CD4-positive, alpha-beta memory T cell (primary cell): ENCODE measurements at regions of chr1 and their contacts with region 1.

Region 1: DNA sequence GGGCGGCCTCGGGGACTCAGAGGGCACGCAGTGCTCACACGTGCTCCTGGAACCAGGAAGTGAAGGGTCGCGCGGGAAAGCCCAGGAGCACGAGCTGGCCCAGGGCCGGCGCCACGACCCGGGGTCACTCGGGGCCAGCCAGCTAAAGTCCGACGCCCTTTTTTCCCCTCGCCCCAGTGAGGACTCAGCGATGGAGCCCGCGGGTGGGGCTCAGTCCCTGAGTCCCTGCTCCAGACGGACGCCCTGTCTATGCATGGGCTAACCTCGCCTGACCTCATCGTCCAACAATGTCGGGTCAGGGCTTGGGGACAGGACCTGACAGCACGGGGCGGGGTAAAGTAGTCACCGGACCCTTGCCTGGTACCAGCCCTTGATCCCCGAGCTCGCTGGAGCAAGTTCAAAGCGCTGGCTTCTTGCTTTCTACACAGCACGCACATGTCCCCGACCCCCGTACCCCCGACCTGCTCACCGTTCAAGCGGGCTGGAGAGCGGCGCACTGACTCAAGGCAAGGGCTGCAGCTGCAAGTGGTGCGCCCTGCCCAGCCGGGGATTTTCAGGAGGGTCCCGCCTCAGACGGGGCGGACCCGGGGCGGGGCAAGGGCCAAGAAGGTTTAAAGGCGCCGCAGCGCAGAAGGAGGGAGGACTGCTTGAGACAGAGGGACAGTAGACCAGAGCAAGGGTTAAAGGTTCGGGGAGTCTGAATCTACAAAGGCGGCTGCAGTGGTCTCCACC is at the start of gene TAGLN2:
- DNase-seq: peak; percentile 87 to 91 (median 89)
- H3K4me3 ChIP-seq: peak within 1 kb of the TSS; percentile 89 to 93
- H3K4me3 Mint-ChIP-seq: peak within 1 kb of the TSS; percentile 94 to 99 (median 98)
- H3K27ac ChIP-seq: peak within 1 kb of the TSS; percentile 98
- H3K27ac Mint-ChIP-seq: peak within 1 kb of the TSS; percentile 99 to 100 (median 100)
- H3K4me1 ChIP-seq: peaks cover 41% of the 10 kb centered on the region
- H3K4me1 Mint-ChIP-seq: peaks cover 29 to 63% (median 41%) of the 10 kb centered on the region in 4 donors
- H3K27me3 ChIP-seq: no peaks in the 10 kb centered on the region
- H3K27me3 Mint-ChIP-seq: peaks cover 0 to 5% of the 10 kb centered on the region in 2 donors
- total RNA-seq, gene TAGLN2: 196 to 207 TPM

Region 2: GRCh38 chr1:159780583-159781582 is 144.3 kb before region 1 on chr1 and contains the start of gene DUSP23:
- CTCF ChIA-PET with region 1: interaction called, 3 read pairs
- POLR2A ChIA-PET with region 1: interaction called, 24 read pairs
- intact Hi-C with region 1: loop called (anchors 1 kb)
- DNase-seq: peak; percentile 96 to 97 (median 97)
- H3K4me3 ChIP-seq: peak within 1 kb of the TSS; percentile 39 to 57
- H3K4me3 Mint-ChIP-seq: peak within 1 kb of the TSS; percentile 83 to 93 (median 87)
- H3K27ac ChIP-seq: peak within 1 kb of the TSS; percentile 61
- H3K27ac Mint-ChIP-seq: peak within 1 kb of the TSS; percentile 81 to 96 (median 92)
- H3K4me1 ChIP-seq: peaks cover 16% of the 10 kb centered on the region
- H3K4me1 Mint-ChIP-seq: peaks cover 14 to 55% (median 36%) of the 10 kb centered on the region in 4 donors
- H3K27me3 ChIP-seq: no peaks in the 10 kb centered on the region
- H3K27me3 Mint-ChIP-seq: no peaks in the 10 kb centered on the region
- total RNA-seq, gene DUSP23: 14.5 to 15.7 TPM

Region 3: DNA sequence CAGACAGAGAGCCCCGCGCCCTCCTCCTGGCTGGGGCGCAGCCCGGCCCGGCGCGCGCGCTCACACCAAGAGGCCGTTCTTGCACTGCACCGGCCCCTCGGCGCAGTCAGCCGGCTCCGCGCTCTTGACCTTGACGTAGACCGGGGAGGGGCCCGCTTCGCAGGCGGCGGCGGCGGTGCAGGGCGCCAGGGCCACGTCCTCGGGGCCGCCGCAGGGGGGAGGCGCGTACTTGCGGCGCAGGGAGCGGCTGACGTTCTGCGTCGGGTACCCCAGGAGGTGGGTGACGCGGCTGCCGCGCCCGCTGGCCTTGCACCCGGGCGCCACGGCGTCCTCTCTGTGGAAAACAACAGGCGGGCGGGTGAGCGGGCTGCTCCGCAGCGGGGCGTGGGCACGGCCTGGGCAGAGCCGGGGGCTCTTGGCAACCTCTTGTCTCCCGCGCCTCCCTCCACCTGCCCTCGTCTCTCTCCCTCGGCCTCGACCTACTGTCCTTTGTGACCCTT is 70.4 kb before region 1 on chr1:
- CTCF ChIA-PET with region 1: interaction called, 4 read pairs
- POLR2A ChIA-PET with region 1: interaction called, 40 read pairs
- intact Hi-C with region 1: loop called (anchors 5 kb)
- DNase-seq: peak; percentile 66 to 75 (median 70)
- H3K4me3 ChIP-seq: peak overlapping the region; percentile 42 to 53
- H3K4me3 Mint-ChIP-seq: peak overlapping the region; percentile 83 to 95 (median 89)
- H3K27ac ChIP-seq: peak overlapping the region; percentile 38
- H3K27ac Mint-ChIP-seq: peak overlapping the region; percentile 33 to 93 (median 84)
- H3K4me1 ChIP-seq: peaks cover 14% of the 10 kb centered on the region
- H3K4me1 Mint-ChIP-seq: peaks cover 9 to 25% (median 14%) of the 10 kb centered on the region in 4 donors
- H3K27me3 ChIP-seq: no peaks in the 10 kb centered on the region
- H3K27me3 Mint-ChIP-seq: no peaks in the 10 kb centered on the region

Region 4: GRCh38 chr1:159945483-159946241 is 20.5 kb after region 1 on chr1 and contains the start of gene IGSF9:
- CTCF ChIA-PET with region 1: interaction called, 4 read pairs
- POLR2A ChIA-PET with region 1: interaction called, 17 read pairs
- intact Hi-C with region 1: loop called (anchors 1 kb)
- DNase-seq: peak; percentile 68 to 79 (median 71)
- H3K4me3 ChIP-seq: peak within 1 kb of the TSS in 1 of 2 donors; percentile 38
- H3K4me3 Mint-ChIP-seq: peak within 1 kb of the TSS; percentile 32 to 86 (median 68)
- H3K27ac ChIP-seq: no peak within 1 kb of the TSS
- H3K27ac Mint-ChIP-seq: peak within 1 kb of the TSS in 3 of 7 donors; percentile 12 to 87 (median 65)
- H3K4me1 ChIP-seq: peaks cover 13% of the 10 kb centered on the region
- H3K4me1 Mint-ChIP-seq: peaks cover 8 to 12% (median 10%) of the 10 kb centered on the region in 4 donors
- H3K27me3 ChIP-seq: peaks cover 21% of the 10 kb centered on the region
- H3K27me3 Mint-ChIP-seq: peaks cover 25 to 35% of the 10 kb centered on the region in 2 donors
- total RNA-seq, gene IGSF9: not detected

Region 5: GRCh38 chr1:159991513-159991912 is 66.4 kb after region 1 on chr1:
- CTCF ChIA-PET with region 1: no interaction called
- POLR2A ChIA-PET with region 1: no interaction called
- intact Hi-C with region 1: no loop called
- DNase-seq: peak in 2 of 5 donors; percentile 9 to 10
- H3K4me3 ChIP-seq: no peak overlapping the region
- H3K4me3 Mint-ChIP-seq: peak overlapping the region in 1 of 8 donors; percentile 60
- H3K27ac ChIP-seq: no peak overlapping the region
- H3K27ac Mint-ChIP-seq: no peak overlapping the region
- H3K4me1 ChIP-seq: no peaks in the 10 kb centered on the region
- H3K4me1 Mint-ChIP-seq: peaks cover 0 to 7% (median 4%) of the 10 kb centered on the region in 4 donors
- H3K27me3 ChIP-seq: no peaks in the 10 kb centered on the region
- H3K27me3 Mint-ChIP-seq: peaks cover 16 to 17% of the 10 kb centered on the region in 2 donors

Region 6: DNA sequence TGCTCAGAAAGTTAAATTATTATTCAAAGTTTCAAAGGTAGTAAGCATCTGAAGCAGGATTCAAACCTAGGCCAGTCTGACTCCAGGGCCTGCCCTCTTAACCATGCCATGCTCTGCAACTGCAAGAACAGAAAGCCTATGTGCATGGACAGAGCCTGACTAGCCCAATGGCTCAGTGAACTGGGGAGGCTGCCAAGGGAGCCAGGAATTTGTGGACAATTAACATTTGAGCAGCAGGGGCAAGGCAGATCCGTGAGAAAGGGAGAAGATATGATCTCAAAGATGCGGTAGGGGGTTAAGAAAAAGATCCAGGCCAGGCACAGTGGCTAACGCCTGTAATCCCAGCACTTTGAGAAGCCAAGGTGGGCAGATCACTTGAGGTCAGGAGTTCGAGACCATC is 219.8 kb after region 1 on chr1:
- CTCF ChIA-PET with region 1: no interaction called
- POLR2A ChIA-PET with region 1: no interaction called
- intact Hi-C with region 1: no loop called
- DNase-seq: no peak
- H3K4me3 ChIP-seq: no peak overlapping the region
- H3K4me3 Mint-ChIP-seq: no peak overlapping the region
- H3K27ac ChIP-seq: no peak overlapping the region
- H3K27ac Mint-ChIP-seq: no peak overlapping the region
- H3K4me1 ChIP-seq: no peaks in the 10 kb centered on the region
- H3K4me1 Mint-ChIP-seq: no peaks in the 10 kb centered on the region
- H3K27me3 ChIP-seq: no peaks in the 10 kb centered on the region
- H3K27me3 Mint-ChIP-seq: peaks cover 11 to 23% of the 10 kb centered on the region in 2 donors

Region 7: DNA sequence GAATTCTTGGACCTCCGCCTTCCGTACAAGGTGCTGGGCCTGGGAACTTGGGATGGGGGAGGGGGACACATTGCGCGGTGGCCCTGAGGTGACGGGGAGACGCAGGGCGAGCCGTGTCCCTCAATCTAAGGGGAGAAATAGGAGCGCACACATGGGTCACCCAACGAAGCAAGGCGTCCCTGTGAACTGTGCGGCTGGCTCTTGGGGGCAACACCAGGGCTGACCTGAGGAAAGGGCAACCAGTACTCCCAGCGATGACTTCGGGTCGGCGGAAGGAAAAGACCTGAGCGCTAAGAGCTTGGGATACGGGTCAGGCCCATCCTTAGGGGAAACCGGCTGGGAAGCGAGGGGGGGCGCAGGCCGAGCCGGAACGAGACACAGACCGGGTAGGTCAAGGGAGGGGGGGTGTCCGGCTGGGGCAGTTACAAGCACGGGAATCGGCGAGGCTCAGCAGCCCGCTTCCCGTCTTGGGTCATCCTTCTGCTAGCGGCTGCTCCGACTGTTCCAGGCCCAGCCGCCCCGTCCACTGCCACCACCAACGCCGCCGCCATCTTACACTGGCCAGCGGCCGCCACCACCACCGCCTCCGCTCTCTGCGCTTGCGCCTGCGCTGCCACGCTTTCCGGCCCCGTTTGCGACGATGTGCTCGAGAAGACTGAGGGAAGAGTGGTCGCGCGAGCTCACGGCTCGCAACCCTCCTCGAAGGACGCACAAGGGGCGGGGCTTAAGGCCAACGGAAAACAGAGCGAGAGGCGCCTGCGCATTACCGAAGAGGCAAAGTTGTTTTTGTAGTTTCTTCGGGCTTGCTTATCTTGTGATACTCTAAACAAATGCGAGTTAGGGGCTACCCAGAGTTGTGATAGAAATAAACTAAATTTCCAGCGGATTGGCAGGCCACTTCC is 337.0 kb after region 1 on chr1 and contains the start of gene DCAF8:
- CTCF ChIA-PET with region 1: no interaction called
- POLR2A ChIA-PET with region 1: interaction called, 20 read pairs
- intact Hi-C with region 1: loop called (anchors 10 kb)
- DNase-seq: peak; percentile 96 to 98 (median 97)
- H3K4me3 ChIP-seq: peak within 1 kb of the TSS; percentile 84 to 91
- H3K4me3 Mint-ChIP-seq: peak within 1 kb of the TSS; percentile 93 to 100 (median 96)
- H3K27ac ChIP-seq: peak within 1 kb of the TSS; percentile 96
- H3K27ac Mint-ChIP-seq: peak within 1 kb of the TSS; percentile 96 to 100 (median 99)
- H3K4me1 ChIP-seq: peaks cover 42% of the 10 kb centered on the region
- H3K4me1 Mint-ChIP-seq: peaks cover 21 to 61% (median 44%) of the 10 kb centered on the region in 4 donors
- H3K27me3 ChIP-seq: no peaks in the 10 kb centered on the region
- H3K27me3 Mint-ChIP-seq: no peaks in the 10 kb centered on the region
- total RNA-seq, gene DCAF8: 211 to 223 TPM